ENCODE measurements at regions of chr1 and their contacts with region 1.

Region 1: DNA sequence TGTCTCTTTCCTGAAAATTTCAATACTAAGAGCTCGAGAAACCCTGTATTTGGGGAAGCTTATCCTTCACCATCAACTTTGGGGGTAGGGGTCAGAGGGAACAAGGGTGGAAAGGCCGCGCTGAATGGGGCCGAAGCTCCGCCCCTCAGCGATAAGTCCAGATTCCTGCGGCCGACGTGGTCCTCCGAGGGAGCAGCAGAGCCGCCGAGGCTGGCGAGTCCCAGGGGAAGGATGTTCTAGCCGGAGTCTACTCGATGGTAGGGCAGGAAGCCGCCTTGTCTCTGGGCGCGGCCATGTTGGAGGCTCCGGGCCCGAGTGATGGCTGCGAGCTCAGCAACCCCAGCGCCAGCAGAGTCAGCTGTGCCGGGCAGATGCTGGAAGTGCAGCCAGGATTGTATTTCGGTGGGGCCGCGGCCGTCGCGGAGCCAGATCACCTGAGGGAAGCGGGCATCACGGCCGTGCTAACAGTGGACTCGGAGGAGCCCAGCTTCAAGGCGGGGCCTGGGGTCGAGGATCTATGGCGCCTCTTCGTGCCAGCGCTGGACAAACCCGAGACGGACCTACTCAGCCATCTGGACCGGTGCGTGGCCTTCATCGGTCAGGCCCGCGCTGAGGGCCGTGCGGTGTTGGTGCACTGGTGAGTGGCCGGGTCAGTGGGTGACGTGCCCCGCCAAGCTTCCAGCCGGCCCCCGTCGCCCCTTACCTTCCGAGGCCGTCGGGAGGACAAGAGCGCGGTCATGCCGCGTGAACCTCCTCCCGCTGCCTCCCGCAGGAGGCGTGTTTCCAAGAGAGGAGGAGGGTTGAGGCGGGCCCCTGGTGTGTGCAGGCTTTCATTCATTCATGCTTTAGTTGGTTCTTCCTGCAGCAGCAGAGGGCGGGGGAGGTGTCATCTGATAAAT is at the start of gene DUSP12:
- DNase-seq: peak; percentile 89
- H3K4me3 Mint-ChIP-seq: peak within 1 kb of the TSS; percentile 98
- H3K27ac Mint-ChIP-seq: peak within 1 kb of the TSS; percentile 98
- H3K4me1 Mint-ChIP-seq: peaks cover 46% of the 10 kb centered on the region
- H3K27me3 Mint-ChIP-seq: peaks cover 9% of the 10 kb centered on the region
- total RNA-seq, gene DUSP12: 21.6 TPM

Region 2: DNA sequence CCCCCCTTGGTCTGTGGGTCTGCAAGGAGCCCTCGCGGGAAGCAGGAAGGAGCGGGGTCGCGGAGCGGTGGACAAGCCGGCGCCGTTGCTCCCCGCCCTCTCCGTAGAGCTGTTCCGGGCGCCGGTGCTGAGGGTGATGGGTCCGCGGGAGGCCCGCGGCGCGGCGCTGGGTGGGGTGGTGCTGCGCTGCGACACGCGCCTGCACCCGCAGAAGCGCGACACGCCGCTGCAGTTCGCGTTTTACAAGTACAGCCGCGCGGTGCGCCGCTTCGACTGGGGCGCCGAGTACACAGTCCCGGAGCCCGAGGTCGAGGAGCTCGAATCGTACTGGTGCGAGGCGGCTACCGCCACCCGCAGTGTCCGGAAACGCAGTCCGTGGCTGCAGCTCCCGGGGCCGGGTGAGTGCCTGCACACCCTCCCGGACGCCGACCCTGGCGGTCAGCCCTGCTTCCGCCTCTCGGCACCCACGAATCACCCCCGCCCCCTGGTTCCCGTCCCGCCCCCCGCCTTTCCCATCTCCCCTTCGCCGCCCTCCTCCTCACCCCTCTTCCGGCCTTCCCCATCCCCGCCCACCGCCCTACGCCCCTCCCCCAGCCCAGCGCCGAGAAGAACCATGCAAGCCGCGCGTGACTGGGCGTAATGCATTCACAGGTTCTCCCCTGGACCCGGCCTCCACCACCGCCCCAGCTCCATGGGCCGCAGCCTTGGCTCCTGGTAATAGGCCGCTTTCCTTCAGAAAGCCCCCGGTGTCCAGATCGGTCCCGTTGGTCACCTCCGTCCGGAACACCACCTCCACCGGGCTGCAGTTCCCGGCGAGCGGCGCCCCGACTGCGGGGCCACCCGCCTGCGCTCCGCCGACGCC is 22.9 kb before region 1 on chr1:
- CTCF ChIA-PET with region 1: interaction called, 11 read pairs
- POLR2A ChIA-PET with region 1: no interaction called
- DNase-seq: peak; percentile 73
- H3K4me3 Mint-ChIP-seq: peak overlapping the region; percentile 83
- H3K27ac Mint-ChIP-seq: peak overlapping the region; percentile 91
- H3K4me1 Mint-ChIP-seq: peaks cover 44% of the 10 kb centered on the region
- H3K27me3 Mint-ChIP-seq: peaks cover 78% of the 10 kb centered on the region

Region 3: DNA sequence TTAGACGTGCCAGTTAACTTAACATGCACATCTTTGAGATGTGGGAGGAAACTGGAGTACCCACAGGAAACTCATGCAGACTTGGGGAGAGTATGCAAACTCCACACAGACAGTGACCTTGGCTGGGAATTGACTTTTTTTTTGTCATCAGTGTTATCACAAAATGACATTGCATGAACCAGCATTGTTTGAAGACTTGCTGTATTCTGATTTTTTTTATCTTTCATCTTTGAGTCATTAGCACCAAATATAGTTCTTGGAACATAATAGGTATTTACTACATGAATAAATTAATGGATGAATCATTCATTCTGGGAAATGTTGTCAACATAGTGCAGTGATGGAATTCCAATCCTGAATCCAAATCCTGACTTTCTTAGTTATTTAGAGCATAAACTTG is 93.4 kb after region 1 on chr1:
- CTCF ChIA-PET with region 1: no interaction called
- POLR2A ChIA-PET with region 1: no interaction called
- DNase-seq: no peak
- H3K4me3 Mint-ChIP-seq: no peak overlapping the region
- H3K27ac Mint-ChIP-seq: no peak overlapping the region
- H3K4me1 Mint-ChIP-seq: peaks cover 4% of the 10 kb centered on the region
- H3K27me3 Mint-ChIP-seq: no peaks in the 10 kb centered on the region